H1 (cell line): ENCODE measurements at regions of chr12 and their contacts with region 1.

Region 1: DNA sequence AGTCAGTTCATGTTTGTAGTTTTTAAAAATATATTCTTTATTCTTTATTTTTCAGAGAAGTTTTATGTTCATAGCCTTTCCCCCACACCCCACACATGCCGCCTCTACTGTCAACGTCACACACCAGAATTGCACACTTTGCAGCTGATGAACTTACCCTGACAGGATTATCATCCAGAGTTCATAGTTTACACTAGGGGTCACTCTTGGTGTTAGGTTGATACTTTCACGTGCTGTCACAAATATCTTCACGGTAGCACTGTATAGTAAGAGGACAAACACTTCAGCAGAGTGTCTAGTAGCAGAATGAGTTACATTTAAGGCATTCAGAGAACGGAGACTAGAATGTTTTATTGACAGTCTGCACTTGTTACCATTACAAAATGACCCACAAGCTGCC is 5.1 kb downstream of the DPPA3 start:
- DNase-seq: no peak
- H3K4me3 ChIP-seq: no peak overlapping the region
- H3K27ac ChIP-seq: no peak overlapping the region
- H3K4me1 ChIP-seq: peaks cover 0 to 5% (median 2%) of the 10 kb centered on the region in 4 experiments; a peak in 4 of 7 replicates
- H3K27me3 ChIP-seq: no peaks in the 10 kb centered on the region
- CTCF ChIP-seq: peak in 2 of 3 experiments; percentile 44 to 59; a peak in 3 of 4 replicates
- EP300 ChIP-seq: no peak
- POLR2A ChIP-seq: no peak
- RAD21 ChIP-seq: peak; percentile 76 to 82

Region 2: DNA sequence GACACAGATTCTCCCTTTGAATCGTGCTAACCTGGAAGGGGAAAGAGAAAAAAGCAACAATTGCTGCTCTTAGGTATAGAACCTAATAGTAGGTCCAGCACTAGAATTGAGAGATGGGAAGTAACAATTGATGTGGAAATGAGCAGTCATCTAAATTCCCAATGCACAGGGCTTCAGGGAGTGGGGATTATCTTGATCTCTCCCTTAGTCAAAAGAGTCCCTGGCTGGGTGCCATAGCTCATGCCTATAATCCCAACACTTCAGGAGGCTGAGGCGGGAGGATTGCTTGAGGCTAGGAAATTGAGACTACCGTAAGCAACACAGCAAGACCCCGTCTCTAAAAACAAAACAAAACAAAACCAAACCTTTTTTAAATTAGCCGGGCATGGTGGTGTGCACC is 54.6 kb before region 1 on chr12:
- CTCF ChIA-PET with region 1: no interaction called
- POLR2A ChIA-PET with region 1: no interaction called
- DNase-seq: no peak
- H3K4me3 ChIP-seq: no peak overlapping the region
- H3K27ac ChIP-seq: no peak overlapping the region
- H3K4me1 ChIP-seq: no peaks in the 10 kb centered on the region
- H3K27me3 ChIP-seq: no peaks in the 10 kb centered on the region; a peak in 1 of 7 replicates
- CTCF ChIP-seq: no peak
- EP300 ChIP-seq: no peak
- POLR2A ChIP-seq: no peak
- RAD21 ChIP-seq: no peak

Region 3: DNA sequence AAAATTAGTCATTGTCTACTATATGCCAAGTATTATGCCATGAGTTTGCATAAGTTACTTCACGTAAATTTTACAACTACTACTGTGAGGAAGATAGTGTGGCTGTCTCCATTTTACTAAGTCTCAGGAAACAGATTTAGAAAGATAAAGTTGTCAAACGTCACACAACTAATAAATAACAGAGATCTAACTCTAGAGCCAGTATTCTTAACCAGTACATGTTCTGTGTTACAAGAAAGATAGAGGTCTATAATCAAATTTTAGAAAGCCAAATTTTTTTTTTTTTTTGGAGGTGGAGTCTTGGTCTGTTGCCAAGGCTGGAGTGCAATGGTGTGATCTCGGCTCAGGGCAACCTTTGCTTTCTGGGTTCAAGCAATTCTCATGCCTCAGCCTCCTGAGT is 16.6 kb after region 1 on chr12:
- CTCF ChIA-PET with region 1: interaction called, 10 read pairs
- POLR2A ChIA-PET with region 1: no interaction called
- DNase-seq: no peak
- H3K4me3 ChIP-seq: no peak overlapping the region
- H3K27ac ChIP-seq: no peak overlapping the region
- H3K4me1 ChIP-seq: peaks cover 0 to 3% (median 0%) of the 10 kb centered on the region in 4 experiments; a peak in 1 of 7 replicates
- H3K27me3 ChIP-seq: no peaks in the 10 kb centered on the region; a peak in 1 of 7 replicates
- CTCF ChIP-seq: no peak
- EP300 ChIP-seq: no peak
- POLR2A ChIP-seq: no peak
- RAD21 ChIP-seq: no peak

Region 4: GRCh38 chr12:7751394-7751793 is 35.0 kb after region 1 on chr12:
- CTCF ChIA-PET with region 1: interaction called, 10 read pairs
- POLR2A ChIA-PET with region 1: no interaction called
- DNase-seq: no peak
- H3K4me3 ChIP-seq: no peak overlapping the region
- H3K27ac ChIP-seq: no peak overlapping the region; the same call in 1 of the 2 replicates
- H3K4me1 ChIP-seq: peaks cover 0 to 3% (median 0%) of the 10 kb centered on the region in 4 experiments; a peak in 1 of 7 replicates
- H3K27me3 ChIP-seq: no peaks in the 10 kb centered on the region
- CTCF ChIP-seq: no peak
- EP300 ChIP-seq: no peak
- POLR2A ChIP-seq: no peak
- RAD21 ChIP-seq: no peak